ENCODE measurements at regions of chr1 and their contacts with region 1.

Region 1: GRCh38 chr1:208093754-208094719 is 150.1 kb downstream of the PLXNA2 start:
- DNase-seq: peak; percentile 83
- H3K4me3 Mint-ChIP-seq: no peak overlapping the region
- H3K27ac Mint-ChIP-seq: peak overlapping the region; percentile 31
- H3K4me1 Mint-ChIP-seq: peaks cover 2% of the 10 kb centered on the region
- H3K27me3 Mint-ChIP-seq: no peaks in the 10 kb centered on the region
- CTCF ChIP-seq: peak; percentile 96

Region 2: DNA sequence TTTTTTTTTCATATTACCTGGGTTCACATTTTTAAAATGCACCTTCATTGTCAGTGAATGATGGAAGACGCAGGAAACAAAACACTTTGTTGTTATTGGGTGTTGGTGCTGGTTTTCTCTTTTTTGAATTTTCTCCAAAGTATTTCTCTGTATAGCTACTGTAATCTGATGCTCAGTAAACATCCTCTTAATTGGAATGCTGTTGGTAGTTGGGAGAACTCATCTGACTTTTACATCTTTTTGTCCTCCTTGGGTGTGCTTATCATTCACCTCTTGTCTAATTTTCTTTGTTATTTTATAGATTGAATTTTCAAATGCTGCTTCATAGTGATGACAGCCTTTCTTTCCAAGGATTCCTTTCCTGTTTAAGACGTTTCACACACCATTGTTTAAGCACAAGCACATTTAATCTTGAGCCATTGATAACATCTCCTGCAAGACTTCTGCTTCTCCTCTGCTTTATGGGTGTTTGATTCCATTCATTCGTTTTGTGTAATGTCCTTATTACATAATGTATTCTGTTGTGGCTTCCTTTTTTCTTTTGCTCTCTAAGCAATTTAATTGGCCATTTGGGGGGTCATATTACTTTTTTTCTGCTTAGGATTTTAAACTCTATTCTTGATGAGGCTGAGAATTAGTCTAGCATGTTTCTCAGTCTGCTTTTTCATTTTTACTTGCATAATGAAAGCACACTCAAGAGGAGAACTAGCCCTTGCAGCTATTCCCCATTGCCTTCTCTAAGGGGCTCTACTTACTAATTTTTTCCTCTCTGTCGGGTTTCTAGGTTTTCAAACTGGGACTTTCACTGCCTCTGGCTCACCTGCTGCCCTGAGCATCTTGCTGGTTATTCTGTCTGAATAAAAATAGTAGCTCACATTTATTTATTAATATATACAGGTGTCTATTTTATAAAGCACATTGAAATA is 141.2 kb before region 1 on chr1:
- CTCF ChIA-PET with region 1: no interaction called
- POLR2A ChIA-PET with region 1: no interaction called
- intact Hi-C with region 1: no loop called
- DNase-seq: no peak
- H3K4me3 Mint-ChIP-seq: no peak overlapping the region
- H3K27ac Mint-ChIP-seq: no peak overlapping the region
- H3K4me1 Mint-ChIP-seq: no peaks in the 10 kb centered on the region
- H3K27me3 Mint-ChIP-seq: peaks cover 10% of the 10 kb centered on the region
- CTCF ChIP-seq: no peak

Region 3: GRCh38 chr1:207981976-207982375 is 112.1 kb before region 1 on chr1:
- CTCF ChIA-PET with region 1: no interaction called
- POLR2A ChIA-PET with region 1: no interaction called
- intact Hi-C with region 1: no loop called
- DNase-seq: peak; percentile 47
- H3K4me3 Mint-ChIP-seq: no peak overlapping the region
- H3K27ac Mint-ChIP-seq: no peak overlapping the region
- H3K4me1 Mint-ChIP-seq: no peaks in the 10 kb centered on the region
- H3K27me3 Mint-ChIP-seq: peaks cover 44% of the 10 kb centered on the region
- CTCF ChIP-seq: peak; percentile 40

Region 4: DNA sequence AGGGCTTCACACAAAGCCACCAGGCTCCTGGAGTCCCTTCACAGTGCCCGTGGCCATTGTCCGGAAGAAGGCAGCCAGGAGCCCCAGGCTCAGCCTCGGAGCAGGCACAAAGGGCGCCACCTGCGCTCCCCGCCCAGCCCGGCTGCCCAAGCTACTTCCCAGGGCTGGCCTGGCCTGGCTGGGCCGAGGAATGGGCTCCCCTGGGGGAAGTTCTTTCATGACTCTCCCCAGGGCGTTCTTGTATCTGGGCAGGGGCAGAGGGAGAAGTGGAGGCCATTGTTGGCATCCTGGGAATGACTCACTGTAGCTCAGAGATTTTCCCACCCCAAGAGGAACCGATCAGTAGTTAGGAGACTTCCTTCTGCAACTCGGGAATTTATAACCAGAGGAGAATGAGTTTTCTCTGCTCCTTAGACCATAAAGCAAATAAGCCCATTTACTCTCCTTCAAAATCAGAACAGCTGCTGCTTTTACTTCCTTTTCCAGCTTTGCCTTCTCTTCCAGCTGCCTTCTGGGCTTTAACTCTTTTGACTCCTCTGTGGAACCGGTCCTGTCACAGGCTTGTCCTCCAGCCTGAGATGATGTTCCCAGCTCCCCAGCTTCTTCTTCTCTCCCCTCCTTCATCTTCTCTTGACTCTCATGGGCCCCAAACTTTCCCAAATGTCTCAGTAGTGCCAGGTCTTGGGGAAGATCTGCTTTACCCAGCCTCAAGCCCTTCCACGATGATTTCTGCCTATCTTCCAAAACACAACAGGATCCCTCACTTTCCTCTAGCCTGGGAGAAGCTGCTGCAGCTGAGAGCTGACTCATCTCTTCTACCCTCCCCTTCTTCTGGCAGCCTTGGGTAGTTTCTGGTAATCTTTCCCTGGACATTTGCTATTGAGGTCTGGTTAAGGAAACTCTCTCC is 64.4 kb before region 1 on chr1:
- CTCF ChIA-PET with region 1: interaction called, 11 read pairs
- POLR2A ChIA-PET with region 1: interaction called, 3 read pairs
- intact Hi-C with region 1: no loop called
- DNase-seq: peak; percentile 26
- H3K4me3 Mint-ChIP-seq: no peak overlapping the region
- H3K27ac Mint-ChIP-seq: peak overlapping the region; percentile 21
- H3K4me1 Mint-ChIP-seq: no peaks in the 10 kb centered on the region
- H3K27me3 Mint-ChIP-seq: no peaks in the 10 kb centered on the region
- CTCF ChIP-seq: no peak

Region 5: DNA sequence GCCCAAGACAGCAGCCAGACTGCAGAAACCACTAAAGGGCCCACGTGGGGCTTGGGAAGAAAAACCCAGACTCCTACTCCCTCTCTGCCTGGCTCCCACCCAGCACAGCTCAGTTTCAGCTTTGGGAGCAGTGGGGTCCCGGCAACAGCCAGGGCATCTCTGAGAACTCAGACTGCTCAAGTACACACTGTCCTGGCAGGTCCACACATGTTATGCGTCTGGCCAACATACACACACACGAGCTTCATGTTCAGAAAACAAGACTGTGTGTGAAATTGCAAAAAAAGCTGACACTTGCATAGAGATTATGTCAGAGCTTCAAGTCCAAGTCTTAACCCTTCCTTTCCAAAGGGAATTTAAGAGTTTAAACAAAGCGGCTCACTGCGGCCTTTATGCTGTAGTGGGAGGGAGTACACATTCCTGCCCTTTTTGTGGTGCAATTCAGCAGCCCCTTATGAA is 46.5 kb before region 1 on chr1:
- CTCF ChIA-PET with region 1: interaction called, 26 read pairs
- POLR2A ChIA-PET with region 1: no interaction called
- intact Hi-C with region 1: no loop called
- DNase-seq: peak; percentile 12
- H3K4me3 Mint-ChIP-seq: no peak overlapping the region
- H3K27ac Mint-ChIP-seq: peak overlapping the region; percentile 41
- H3K4me1 Mint-ChIP-seq: peaks cover 12% of the 10 kb centered on the region
- H3K27me3 Mint-ChIP-seq: no peaks in the 10 kb centered on the region
- CTCF ChIP-seq: no peak

Region 6: GRCh38 chr1:208065862-208066261 is 28.2 kb before region 1 on chr1:
- CTCF ChIA-PET with region 1: interaction called, 23 read pairs
- POLR2A ChIA-PET with region 1: interaction called, 3 read pairs
- intact Hi-C with region 1: no loop called
- DNase-seq: no peak
- H3K4me3 Mint-ChIP-seq: no peak overlapping the region
- H3K27ac Mint-ChIP-seq: no peak overlapping the region
- H3K4me1 Mint-ChIP-seq: no peaks in the 10 kb centered on the region
- H3K27me3 Mint-ChIP-seq: no peaks in the 10 kb centered on the region
- CTCF ChIP-seq: no peak

Region 7: GRCh38 chr1:208107425-208108212 is 13.6 kb after region 1 on chr1:
- CTCF ChIA-PET with region 1: interaction called, 27 read pairs
- POLR2A ChIA-PET with region 1: interaction called, 5 read pairs
- intact Hi-C with region 1: no loop called
- DNase-seq: peak; percentile 100
- H3K4me3 Mint-ChIP-seq: peak overlapping the region; percentile 28
- H3K27ac Mint-ChIP-seq: peak overlapping the region; percentile 69
- H3K4me1 Mint-ChIP-seq: peaks cover 47% of the 10 kb centered on the region
- H3K27me3 Mint-ChIP-seq: no peaks in the 10 kb centered on the region
- CTCF ChIP-seq: no peak

Region 8: DNA sequence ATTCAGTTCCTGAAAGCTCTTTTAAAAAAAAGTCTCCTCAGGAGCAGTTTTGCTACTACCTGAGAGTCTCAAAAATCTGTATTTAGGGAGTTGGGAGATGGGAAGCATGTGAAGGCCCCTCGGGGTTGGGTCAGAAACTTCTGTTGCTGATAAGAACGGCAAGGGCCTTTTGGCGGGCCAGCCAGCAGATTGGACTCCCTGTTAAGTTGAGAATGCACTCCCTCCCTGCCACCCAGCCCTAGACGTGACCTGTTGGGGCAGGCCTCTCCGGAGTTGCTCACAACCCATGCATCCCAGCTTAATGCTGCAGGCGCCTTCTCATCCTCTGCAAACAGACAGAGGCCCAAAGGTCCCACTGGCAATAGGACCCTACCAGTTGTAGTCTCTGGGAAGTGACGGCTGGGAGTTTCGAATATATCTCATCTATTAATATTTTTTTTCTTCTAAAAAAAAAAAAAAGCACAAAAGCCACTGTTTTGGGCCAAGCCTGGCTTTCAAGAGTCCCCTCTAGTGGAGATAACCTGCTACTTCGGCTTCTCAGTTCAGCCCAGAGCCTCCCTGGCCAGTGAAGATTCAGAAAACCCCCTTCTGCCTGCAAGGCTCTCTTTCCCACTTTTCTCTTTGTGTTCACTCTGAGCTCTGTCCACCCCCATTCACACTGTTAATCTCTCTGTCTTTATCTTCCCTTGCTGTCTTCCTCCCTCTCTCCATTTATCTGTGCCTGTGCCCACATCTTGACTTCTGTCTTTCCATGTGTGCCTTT is 144.9 kb after region 1 on chr1:
- CTCF ChIA-PET with region 1: interaction called, 49 read pairs
- POLR2A ChIA-PET with region 1: no interaction called
- intact Hi-C with region 1: loop called (anchors 1 kb)
- DNase-seq: peak; percentile 93
- H3K4me3 Mint-ChIP-seq: no peak overlapping the region
- H3K27ac Mint-ChIP-seq: peak overlapping the region; percentile 81
- H3K4me1 Mint-ChIP-seq: peaks cover 60% of the 10 kb centered on the region
- H3K27me3 Mint-ChIP-seq: no peaks in the 10 kb centered on the region
- CTCF ChIP-seq: peak; percentile 98